Activated T-helper 1 cell treated with anti-CD3 and anti-CD28 coated beads, Interleukin-12 subunit alpha, Interleukin-12 subunit beta, Interleukin-2, Interleukin-4 antibody, amounts not matched to agents 30 ng/mL and 10 ng/mL and 1 ng/mL, durations not matched to agents 14 hours and 24 hours and 36 hours (primary cell): ENCODE measurements at regions of chr17 and their contacts with region 1.

Region 1: DNA sequence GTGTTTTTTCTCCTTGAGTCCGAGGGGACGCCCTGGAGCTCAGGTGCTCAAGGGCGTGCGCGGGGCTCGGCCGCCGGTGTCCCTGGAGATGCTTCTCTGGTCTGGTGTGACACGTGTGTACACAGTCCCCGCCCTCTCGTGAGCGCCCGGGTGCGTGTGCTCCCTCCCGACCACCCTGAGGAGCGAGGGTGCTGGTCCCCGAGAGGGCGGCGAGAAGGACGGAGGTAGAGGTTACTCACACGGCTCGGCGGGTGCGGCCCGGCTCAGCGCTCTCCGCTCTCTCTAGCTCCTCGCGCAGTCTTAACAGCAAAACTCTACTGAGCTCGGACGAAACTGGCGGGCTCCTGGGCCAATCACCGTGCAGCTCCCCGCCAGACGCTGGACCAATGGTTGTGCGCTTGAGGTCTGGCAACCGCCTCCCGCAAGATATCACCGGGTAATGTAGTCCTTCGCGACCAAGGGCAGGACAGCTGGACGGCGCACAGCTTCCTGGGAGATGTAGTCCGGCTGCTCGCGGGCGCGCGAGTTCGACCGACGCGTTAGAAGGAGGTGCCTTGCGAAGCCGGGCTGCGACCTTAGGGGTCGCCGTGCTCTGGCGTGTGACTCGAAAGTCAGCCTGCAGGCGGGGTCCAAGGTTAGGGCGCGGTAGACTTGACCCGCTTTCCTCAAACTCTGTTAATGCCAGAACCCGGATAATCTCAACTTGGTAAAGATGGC is at the start of gene SLC25A19:
- DNase-seq: peak; percentile 97
- H3K4me3 Mint-ChIP-seq: peak within 1 kb of the TSS; percentile 97
- H3K27ac Mint-ChIP-seq: peak within 1 kb of the TSS; percentile 100
- H3K4me1 Mint-ChIP-seq: peaks cover 19% of the 10 kb centered on the region
- H3K27me3 Mint-ChIP-seq: no peaks in the 10 kb centered on the region
- total RNA-seq, gene SLC25A19: 119 and 126 TPM in 2 replicates

Region 2: GRCh38 chr17:74873038-74873873 is 416.0 kb before region 1 on chr17:
- intact Hi-C with region 1: loop called (anchors 1 kb)
- DNase-seq: peak; percentile 98
- H3K4me3 Mint-ChIP-seq: peak overlapping the region; percentile 89
- H3K27ac Mint-ChIP-seq: peak overlapping the region; percentile 87
- H3K4me1 Mint-ChIP-seq: peaks cover 31% of the 10 kb centered on the region
- H3K27me3 Mint-ChIP-seq: peaks cover 5% of the 10 kb centered on the region

Region 3: GRCh38 chr17:75250009-75250471 is 39.2 kb before region 1 on chr17:
- intact Hi-C with region 1: loop called (anchors 2 kb)
- DNase-seq: peak; percentile 64
- H3K4me3 Mint-ChIP-seq: peak overlapping the region; percentile 77
- H3K27ac Mint-ChIP-seq: peak overlapping the region; percentile 92
- H3K4me1 Mint-ChIP-seq: peaks cover 63% of the 10 kb centered on the region
- H3K27me3 Mint-ChIP-seq: no peaks in the 10 kb centered on the region

Region 4: GRCh38 chr17:75319904-75320691 is 30.8 kb after region 1 on chr17:
- intact Hi-C with region 1: loop called (anchors 1 kb)
- DNase-seq: no peak
- H3K4me3 Mint-ChIP-seq: no peak overlapping the region
- H3K27ac Mint-ChIP-seq: no peak overlapping the region
- H3K4me1 Mint-ChIP-seq: peaks cover 16% of the 10 kb centered on the region
- H3K27me3 Mint-ChIP-seq: no peaks in the 10 kb centered on the region

Region 5: GRCh38 chr17:75412455-75413317 is 123.4 kb after region 1 on chr17:
- intact Hi-C with region 1: loop called (anchors 1 kb)
- DNase-seq: peak; percentile 69
- H3K4me3 Mint-ChIP-seq: no peak overlapping the region
- H3K27ac Mint-ChIP-seq: no peak overlapping the region
- H3K4me1 Mint-ChIP-seq: peaks cover 29% of the 10 kb centered on the region
- H3K27me3 Mint-ChIP-seq: peaks cover 10% of the 10 kb centered on the region

Region 6: DNA sequence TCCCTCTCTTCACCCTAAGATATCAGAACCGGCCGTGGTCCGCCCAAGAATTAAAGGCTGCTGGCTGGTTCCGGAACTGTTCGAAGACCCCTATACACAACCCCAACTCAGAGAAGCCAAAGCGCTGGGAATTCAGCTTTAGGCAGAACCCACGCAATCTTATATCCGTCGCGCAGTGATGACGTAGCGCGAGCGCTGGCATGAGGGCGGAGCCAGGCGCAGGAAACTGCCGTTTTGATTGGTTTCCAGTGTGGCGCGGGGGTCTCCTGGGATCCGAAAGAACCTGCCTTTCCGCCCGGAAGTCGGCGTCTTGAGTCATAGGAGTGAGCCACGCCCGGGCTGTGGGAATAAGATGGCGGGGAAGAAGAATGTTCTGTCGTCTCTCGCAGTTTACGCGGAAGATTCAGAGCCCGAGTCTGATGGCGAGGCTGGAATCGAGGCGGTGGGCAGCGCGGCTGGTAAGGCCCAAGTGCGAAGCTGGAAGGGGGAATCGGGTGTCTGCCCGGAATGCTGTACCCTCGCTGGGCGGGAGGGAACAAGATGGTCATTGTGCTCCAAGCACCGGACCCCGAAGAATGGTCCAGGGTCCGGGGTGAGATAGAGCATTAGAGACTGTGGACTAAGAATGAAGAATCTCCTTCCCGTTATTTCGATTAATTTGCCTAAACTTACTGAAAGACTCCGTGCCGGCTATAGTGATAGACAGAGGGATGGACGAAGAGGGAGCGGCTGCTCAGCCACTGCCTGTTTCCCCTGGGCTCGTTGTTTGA is 377.9 kb after region 1 on chr17 and contains the starts of genes RECQL5 and SAP30BP:
- intact Hi-C with region 1: loop called (anchors 2 kb)
- DNase-seq: peak; percentile 98
- H3K4me3 Mint-ChIP-seq: peak within 1 kb of the TSS; percentile 79
- H3K27ac Mint-ChIP-seq: peak within 1 kb of the TSS; percentile 71
- H3K4me1 Mint-ChIP-seq: peaks cover 11% of the 10 kb centered on the region
- H3K27me3 Mint-ChIP-seq: no peaks in the 10 kb centered on the region
- total RNA-seq, gene RECQL5: 29.9 and 34.1 TPM in 2 replicates
- total RNA-seq, gene SAP30BP: 113 and 117 TPM in 2 replicates